Panc1 (cell line): ENCODE measurements at regions of chr15 and their contacts with region 1.

Region 1: DNA sequence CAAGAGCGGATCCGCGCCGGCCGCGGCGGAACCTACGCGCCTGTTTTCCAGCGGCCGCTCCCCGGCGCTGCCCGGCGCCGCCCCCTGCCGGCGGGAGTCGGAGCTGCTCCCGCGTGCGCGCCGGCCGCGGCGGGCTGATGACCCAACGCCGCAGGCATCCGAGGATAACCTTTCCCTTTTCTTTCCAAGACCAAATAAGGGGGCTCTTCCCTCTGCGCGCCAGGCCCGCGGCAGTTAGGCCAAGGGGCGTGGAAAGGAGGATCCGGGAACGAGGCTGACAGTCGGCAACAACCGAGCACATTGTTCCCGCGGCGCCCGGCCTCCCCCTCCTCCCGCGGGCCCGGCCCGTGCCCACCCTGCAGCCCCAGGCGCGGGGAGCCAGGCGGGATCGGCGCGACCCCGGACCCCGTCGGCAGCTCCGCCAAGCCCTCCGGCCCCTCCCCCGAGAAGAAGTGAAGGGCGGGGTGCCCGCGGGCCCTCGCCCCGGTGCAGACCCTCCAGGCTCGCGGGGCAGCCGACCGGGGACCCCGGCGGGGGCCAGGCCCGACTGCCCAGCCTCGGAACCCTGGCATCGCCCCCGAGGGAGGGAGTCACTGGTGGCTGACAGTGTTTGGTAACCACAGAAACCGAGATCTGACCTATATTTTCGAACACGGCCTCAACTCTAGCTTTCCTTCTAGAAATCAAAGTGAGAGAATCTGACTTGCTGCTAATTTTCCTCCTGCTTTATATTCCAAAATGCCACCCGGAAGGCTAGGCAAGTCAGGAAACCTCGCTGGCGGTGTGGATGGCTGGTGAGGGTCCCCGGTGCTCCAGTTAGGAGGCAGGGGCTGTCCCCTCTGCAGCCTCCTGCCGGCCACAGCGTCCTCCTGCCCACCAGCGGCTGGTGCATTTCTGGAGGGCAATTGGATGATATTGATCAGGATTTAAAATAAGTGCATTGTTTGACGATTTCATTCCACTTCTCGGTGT is 45.6 kb upstream of the SYNM start:
- DNase-seq: peak; percentile 27
- ATAC-seq: peak; percentile 93
- H3K4me3 ChIP-seq: peak overlapping the region; percentile 58 to 65
- H3K27ac ChIP-seq: peak overlapping the region; percentile 74
- H3K4me1 ChIP-seq: peaks cover 4% of the 10 kb centered on the region; the same call in 1 of the 2 replicates
- H3K27me3 ChIP-seq: no peaks in the 10 kb centered on the region
- CTCF ChIP-seq: peak; percentile 91

Region 2: GRCh38 chr15:98844261-98844660 is 215.0 kb before region 1 on chr15:
- CTCF ChIA-PET with region 1: no interaction called
- POLR2A ChIA-PET with region 1: interaction called, 10 read pairs
- in situ Hi-C with region 1: no loop called
- intact Hi-C with region 1: no loop called
- DNase-seq: no peak
- ATAC-seq: no peak
- H3K4me3 ChIP-seq: no peak overlapping the region
- H3K27ac ChIP-seq: peak overlapping the region; percentile 46; the same call in 1 of the 2 replicates
- H3K4me1 ChIP-seq: peaks cover 62% of the 10 kb centered on the region
- H3K27me3 ChIP-seq: no peaks in the 10 kb centered on the region
- CTCF ChIP-seq: no peak

Region 3: DNA sequence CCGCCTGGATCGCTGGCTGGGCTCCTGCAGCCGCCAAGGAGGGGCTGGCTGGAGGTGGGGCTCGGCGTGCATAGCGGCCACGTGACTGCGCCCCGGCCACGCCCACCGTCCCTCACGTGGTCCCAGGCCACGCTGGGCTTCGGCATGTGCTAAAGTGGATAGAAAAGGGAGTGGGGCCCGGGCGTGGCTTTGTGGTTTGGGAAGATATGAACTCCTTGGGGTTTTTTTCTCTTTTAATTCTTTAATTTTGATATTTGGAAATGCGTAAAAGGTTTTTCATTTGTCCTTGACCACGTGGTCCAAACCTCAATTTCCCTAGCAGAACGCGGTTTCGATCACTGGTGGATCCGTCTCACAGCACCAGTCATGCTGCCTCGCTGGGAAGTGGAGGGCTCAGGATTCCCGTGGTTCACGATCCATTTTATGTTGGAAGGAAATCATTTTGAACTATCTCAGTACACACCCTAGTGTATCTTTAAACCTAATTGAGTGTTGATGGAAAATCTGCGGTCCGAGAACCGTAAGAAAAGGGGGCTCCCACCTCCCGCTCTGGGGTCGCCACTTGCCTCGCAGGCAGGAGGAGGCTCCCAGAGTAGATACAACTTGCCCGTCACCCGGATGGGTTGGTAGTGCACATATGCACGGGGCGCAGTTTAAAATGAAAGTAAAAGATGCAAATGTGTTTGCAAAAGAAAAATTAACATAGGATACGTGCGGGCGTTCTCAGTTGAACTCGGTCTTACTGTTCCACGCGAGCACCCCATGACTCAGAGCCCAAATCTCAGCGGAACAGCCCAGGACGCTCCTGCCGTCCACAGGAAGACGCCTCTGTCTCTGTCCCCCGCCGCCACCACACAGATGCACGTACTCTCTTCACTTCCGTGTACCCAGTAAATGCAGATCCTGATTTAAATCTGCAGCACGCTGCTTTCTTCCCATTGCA is 193.6 kb before region 1 on chr15:
- CTCF ChIA-PET with region 1: no interaction called
- POLR2A ChIA-PET with region 1: interaction called, 7 read pairs
- in situ Hi-C with region 1: no loop called
- intact Hi-C with region 1: loop called (anchors 5 kb)
- DNase-seq: no peak
- ATAC-seq: peak; percentile 93
- H3K4me3 ChIP-seq: peak overlapping the region; percentile 55 to 79
- H3K27ac ChIP-seq: peak overlapping the region; percentile 100
- H3K4me1 ChIP-seq: peaks cover 76% of the 10 kb centered on the region
- H3K27me3 ChIP-seq: no peaks in the 10 kb centered on the region
- CTCF ChIP-seq: no peak

Region 4: GRCh38 chr15:98943601-98944151 is 115.6 kb before region 1 on chr15:
- CTCF ChIA-PET with region 1: interaction called, 3 read pairs
- POLR2A ChIA-PET with region 1: no interaction called
- in situ Hi-C with region 1: no loop called
- intact Hi-C with region 1: loop called (anchors 10 kb)
- DNase-seq: no peak
- ATAC-seq: no peak
- H3K4me3 ChIP-seq: no peak overlapping the region
- H3K27ac ChIP-seq: no peak overlapping the region
- H3K4me1 ChIP-seq: no peaks in the 10 kb centered on the region
- H3K27me3 ChIP-seq: no peaks in the 10 kb centered on the region
- CTCF ChIP-seq: no peak

Region 5: DNA sequence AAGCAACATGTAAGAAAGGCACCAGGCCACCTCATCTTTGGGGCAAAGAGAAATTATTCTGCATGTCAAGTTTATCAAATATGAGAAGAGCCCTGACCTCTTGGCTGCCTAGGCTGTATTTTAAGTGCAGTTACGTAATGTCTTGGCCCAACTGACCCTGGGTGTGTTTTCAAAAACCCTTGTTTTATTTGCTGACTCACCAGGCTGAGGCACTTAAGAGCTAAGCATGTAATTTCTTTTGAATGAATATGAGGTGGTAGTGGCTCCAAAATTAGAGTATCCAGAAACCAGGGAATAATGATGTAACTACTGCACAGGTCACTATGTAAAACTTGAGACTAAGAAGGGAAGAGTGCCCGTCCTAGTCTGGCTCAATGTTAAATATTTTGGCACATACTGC is 76.0 kb before region 1 on chr15:
- CTCF ChIA-PET with region 1: no interaction called
- POLR2A ChIA-PET with region 1: no interaction called
- in situ Hi-C with region 1: no loop called
- intact Hi-C with region 1: no loop called
- DNase-seq: peak; percentile 24
- ATAC-seq: 0 out of 2 replicates have a peak, but pooled peaks have one; percentile 36
- H3K4me3 ChIP-seq: no peak overlapping the region
- H3K27ac ChIP-seq: no peak overlapping the region
- H3K4me1 ChIP-seq: 0 out of 2 replicates have a peak, but pooled peaks cover 7% of the 10 kb centered on the region
- H3K27me3 ChIP-seq: no peaks in the 10 kb centered on the region
- CTCF ChIP-seq: no peak

Region 6: DNA sequence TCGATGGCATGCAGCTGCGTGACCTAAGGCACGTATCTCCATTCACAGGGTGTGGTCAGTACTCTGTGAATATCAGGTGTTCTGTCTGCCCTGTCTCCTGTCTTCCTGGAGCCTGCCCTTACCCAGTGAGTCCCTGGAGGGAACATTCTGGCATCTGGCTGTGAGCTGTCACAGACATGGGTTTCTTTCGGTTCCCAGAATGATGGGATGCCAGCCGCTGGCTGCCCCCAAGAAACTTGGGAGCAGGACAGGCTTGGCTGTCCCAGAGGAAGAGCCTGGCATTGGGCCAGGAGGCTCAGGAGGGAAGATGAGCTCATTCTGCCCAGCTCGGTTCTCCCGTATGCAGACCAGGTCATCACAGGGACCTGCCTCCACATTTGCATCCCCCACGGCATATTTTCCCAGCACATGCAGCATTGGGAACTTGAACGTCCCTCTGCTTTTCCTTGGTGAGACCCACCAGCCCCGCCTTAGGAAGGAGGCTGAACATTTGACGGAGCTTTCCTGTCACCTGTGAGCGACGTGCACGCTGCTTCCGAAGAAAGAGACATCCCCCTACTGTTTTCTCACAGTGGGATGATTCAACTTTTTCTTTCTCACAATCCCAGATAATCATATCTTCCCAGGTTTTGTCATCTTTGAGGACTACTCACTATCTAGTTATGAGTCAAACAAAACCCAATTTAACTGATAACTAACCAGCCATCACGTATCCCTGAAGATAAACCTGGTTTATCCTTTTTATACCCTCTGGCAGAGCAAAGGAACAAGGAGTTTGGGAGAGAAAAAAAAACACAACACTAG is 29.8 kb before region 1 on chr15:
- CTCF ChIA-PET with region 1: no interaction called
- POLR2A ChIA-PET with region 1: no interaction called
- in situ Hi-C with region 1: no loop called
- intact Hi-C with region 1: no loop called
- DNase-seq: no peak
- ATAC-seq: no peak
- H3K4me3 ChIP-seq: no peak overlapping the region
- H3K27ac ChIP-seq: no peak overlapping the region
- H3K4me1 ChIP-seq: no peaks in the 10 kb centered on the region
- H3K27me3 ChIP-seq: no peaks in the 10 kb centered on the region
- CTCF ChIP-seq: no peak